IMR-90 (cell line): ENCODE measurements at regions of chr12 and their contacts with region 1.

Region 1: DNA sequence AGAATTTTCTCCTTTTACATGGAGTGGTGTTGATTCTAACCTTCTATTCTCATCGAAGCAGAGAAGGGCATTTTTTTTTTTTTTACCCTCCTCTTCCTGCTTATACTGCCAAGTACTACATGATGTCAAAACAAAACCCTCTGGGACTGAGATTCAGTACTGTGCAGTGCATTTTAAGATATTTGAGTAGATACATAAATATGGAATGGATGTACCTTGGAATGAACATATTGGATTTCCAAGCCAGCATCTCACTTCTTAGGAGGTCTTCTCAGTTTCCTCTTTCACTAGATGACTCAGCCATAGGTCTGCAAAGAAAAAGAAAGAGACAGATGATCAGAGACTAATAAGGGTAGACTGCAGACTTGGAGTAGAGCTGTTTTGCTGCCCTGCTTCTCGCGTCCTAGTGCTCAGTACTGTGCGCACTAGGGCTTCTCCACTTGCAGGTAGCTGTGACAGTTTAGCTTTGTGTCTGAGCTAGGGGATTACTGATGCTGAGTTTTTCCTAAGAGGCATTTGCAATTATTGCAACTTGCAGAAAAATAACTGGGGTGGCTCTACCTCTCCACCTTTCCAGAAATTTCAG is 20.4 kb downstream of the TPH2 start:
- DNase-seq: peak; percentile 79
- ATAC-seq: peak; percentile 61
- H3K4me3 ChIP-seq: no peak overlapping the region
- H3K27ac ChIP-seq: peak overlapping the region; percentile 36; the same call in 1 of the 2 replicates
- H3K4me1 ChIP-seq: peaks cover 12% of the 10 kb centered on the region
- H3K27me3 ChIP-seq: no peaks in the 10 kb centered on the region
- CTCF ChIP-seq: no peak
- POLR2A ChIP-seq: no peak
- RAD21 ChIP-seq: no peak

Region 2: DNA sequence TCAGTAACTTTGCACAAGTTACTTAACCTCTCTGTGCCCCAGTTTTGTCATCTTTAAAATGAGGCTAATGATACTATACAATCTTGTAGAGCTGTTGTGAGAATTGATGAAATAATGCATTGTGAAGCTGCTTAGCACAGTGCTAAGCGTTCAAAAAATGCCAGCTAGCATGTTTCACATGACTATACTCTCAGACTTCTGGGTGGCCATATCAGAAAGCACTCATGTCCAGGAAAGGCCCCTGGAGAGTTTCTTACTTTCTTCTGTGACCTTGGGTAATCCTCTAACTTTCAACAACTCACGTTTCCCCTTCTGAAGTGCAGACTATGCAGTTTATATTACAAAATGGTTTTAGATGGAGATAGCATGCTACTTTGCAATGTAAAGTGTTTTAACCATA is 47.7 kb after region 1 on chr12:
- CTCF ChIA-PET with region 1: no interaction called
- POLR2A ChIA-PET with region 1: no interaction called
- dilution Hi-C with region 1: no loop called
- in situ Hi-C with region 1: no loop called
- intact Hi-C with region 1: no loop called
- DNase-seq: no peak
- ATAC-seq: no peak
- H3K4me3 ChIP-seq: no peak overlapping the region
- H3K27ac ChIP-seq: no peak overlapping the region
- H3K4me1 ChIP-seq: peaks cover 2% of the 10 kb centered on the region; the same call in 1 of the 2 replicates
- H3K27me3 ChIP-seq: peaks cover 13% of the 10 kb centered on the region
- CTCF ChIP-seq: no peak
- POLR2A ChIP-seq: no peak
- RAD21 ChIP-seq: no peak

Region 3: DNA sequence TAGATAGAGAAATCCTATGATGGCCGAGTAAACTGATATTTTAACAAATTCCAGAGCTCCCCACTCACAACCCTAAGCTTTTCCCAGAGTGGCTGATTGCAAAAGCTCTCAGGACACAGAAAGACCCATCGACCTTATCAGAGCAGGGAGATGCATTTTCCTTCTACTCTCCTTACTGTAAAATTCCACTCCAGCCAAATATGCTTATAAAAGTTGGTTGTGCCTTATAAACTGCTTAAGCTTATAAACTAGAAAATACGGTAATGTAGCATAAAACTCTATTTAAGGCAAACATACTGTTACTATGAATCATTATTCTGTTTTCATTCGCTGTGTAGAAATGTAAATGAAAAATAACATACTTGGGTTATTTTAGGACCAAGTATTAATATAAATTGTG is 271.5 kb after region 1 on chr12:
- CTCF ChIA-PET with region 1: no interaction called
- POLR2A ChIA-PET with region 1: no interaction called
- dilution Hi-C with region 1: no loop called
- in situ Hi-C with region 1: no loop called
- intact Hi-C with region 1: loop called (anchors 10 kb)
- DNase-seq: peak; percentile 95
- ATAC-seq: peak; percentile 89
- H3K4me3 ChIP-seq: no peak overlapping the region
- H3K27ac ChIP-seq: peak overlapping the region; percentile 2; the same call in 1 of the 2 replicates
- H3K4me1 ChIP-seq: peaks cover 13% of the 10 kb centered on the region
- H3K27me3 ChIP-seq: no peaks in the 10 kb centered on the region
- CTCF ChIP-seq: no peak
- POLR2A ChIP-seq: no peak
- RAD21 ChIP-seq: no peak